Posterior cingulate gyrus (tissue), 11 donors: ENCODE measurements at regions of chr14 and their contacts with region 1.

Region 1: DNA sequence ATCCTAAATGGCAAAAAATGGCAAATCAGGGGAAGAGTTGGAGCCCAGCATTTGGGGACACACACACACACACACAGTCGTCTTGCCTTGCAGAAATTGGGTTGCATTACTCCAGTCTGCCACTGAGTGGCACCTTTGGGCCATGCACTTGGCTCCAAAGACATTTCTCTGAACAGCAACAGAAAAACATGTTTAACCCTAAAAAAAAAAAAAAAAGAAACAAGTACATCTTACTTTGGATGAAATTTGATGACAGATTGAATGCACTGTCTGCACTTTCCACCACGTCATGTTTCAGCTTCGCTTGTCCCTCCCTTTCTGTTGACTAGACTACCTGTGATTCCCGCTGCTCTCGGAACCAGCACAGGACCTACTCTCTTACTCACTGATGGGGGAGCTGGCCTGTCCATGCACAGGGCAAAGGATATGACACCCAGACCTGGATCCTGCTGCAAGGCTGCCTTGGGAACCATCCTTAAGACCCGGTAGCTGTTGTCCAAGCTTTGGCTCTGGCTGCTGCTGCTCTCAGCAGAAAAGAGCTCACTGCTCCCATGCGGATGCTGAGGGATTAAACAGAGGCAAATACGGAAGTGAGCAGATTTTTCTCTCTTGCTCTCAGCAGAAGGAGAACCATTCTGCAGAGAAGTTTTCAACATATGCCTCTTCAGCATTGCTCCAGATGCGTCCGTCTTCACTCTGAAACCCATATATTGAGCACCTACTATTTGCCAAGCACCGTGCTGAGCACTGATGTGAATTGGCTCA is 376.8 kb downstream of the DPF3 start:
- DNase-seq: peak in 9 of 10 donors; percentile 46 to 96 (median 76)

Region 2: GRCh38 chr14:72443991-72444441 is 73.1 kb before region 1 on chr14:
- intact Hi-C with region 1: no loop called
- DNase-seq: no peak

Region 3: GRCh38 chr14:72904840-72905561 is 387.9 kb after region 1 on chr14:
- intact Hi-C with region 1: loop called (anchors 1 kb)
- DNase-seq: peak in 8 of 10 donors; percentile 42 to 92 (median 70)

Region 4: DNA sequence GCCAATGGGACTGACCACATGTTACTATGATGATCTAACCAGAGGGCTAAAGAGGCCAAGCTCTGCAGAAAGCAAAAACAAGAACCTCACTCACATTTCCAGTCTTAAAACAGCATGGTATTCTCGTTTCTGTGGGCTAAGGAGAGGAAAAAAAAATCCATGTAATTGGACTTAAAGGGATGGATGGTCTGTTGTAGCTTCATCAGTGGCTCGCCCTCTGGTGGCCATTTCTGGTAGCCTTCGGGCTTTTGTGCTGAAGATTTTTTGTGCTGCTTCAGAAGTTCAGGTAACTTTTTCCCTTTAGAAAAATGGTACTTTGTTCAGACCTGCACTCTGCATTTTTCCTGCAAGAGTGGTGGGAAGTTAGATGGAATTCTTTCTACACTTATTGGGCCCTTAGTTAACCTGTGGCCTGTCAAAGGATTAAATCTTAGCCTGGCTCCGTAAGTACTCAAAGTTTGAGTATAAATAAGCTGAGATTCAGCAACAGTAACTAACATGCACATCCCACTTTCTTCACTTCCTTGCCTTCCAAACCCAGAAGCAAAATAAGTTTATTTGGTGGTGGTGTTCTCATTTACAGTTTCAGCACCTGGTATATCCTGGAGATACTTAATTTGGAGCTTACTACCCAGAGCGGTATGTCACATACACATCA is 431.5 kb after region 1 on chr14:
- intact Hi-C with region 1: loop called (anchors 5 kb)
- DNase-seq: peak; percentile 44 to 94 (median 77)